ENCODE measurements at regions of chr3 and their contacts with region 1.

Region 1: GRCh38 chr3:112519424-112520001 is 20.2 kb upstream of the BTLA start:
- DNase-seq: peak in 2 of 4 donors; percentile 43 to 74
- ATAC-seq: peak; percentile 96
- H3K4me3 ChIP-seq: no peak overlapping the region
- H3K27ac ChIP-seq: no peak overlapping the region
- H3K4me1 ChIP-seq: no peaks in the 10 kb centered on the region
- H3K27me3 ChIP-seq: no peaks in the 10 kb centered on the region
- CTCF ChIP-seq: peak; percentile 61 to 64

Region 2: GRCh38 chr3:112293368-112294321 is 225.9 kb before region 1 on chr3 and contains the start of gene SLC9C1:
- intact Hi-C with region 1: loop called in 1 of 2 experiments (anchors 10 kb)
- DNase-seq: peak in 2 of 4 donors; percentile 72 to 87
- ATAC-seq: peak; percentile 94
- H3K4me3 ChIP-seq: peak within 1 kb of the TSS; percentile 28
- H3K27ac ChIP-seq: peak within 1 kb of the TSS; percentile 59 to 77
- H3K4me1 ChIP-seq: peaks cover 0 to 10% of the 10 kb centered on the region in 2 donors
- H3K27me3 ChIP-seq: no peaks in the 10 kb centered on the region
- CTCF ChIP-seq: peak; percentile 39 to 40
- polyA plus RNA-seq, gene SLC9C1: 0.54 to 1.3 (median 0.65) TPM

Region 3: DNA sequence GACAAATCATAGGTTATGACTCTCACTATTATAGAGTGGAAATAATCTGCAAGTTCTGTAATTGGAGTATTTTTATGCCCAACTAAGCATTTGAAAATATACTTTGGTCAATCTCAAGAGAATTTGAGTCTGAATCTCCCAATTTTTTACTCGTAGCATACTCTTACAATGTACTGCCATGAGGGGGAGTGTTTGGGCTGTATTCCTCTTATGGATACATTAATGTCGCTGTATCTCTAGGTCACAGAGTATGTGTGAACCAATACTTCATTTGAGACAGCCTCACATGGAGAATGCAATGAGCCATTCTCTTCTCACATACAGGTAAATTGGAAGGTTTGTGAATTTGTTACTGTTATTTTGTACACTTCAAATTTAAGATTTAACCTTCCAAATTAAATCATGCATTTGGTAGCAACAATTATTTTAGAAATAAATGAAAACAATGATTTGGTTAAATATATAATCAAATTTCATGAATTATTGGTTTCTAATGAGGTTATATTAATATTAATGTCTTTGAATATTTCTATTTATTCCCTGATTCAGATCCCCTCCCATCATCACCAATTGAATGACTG is 192.1 kb before region 1 on chr3:
- intact Hi-C with region 1: loop called in 1 of 2 experiments (anchors 5 kb)
- DNase-seq: peak in 1 of 4 donors; percentile 72
- ATAC-seq: peak; percentile 99
- H3K4me3 ChIP-seq: no peak overlapping the region
- H3K27ac ChIP-seq: no peak overlapping the region
- H3K4me1 ChIP-seq: peaks cover 0 to under 1% of the 10 kb centered on the region in 2 donors
- H3K27me3 ChIP-seq: peaks cover 0 to 7% of the 10 kb centered on the region in 2 donors
- CTCF ChIP-seq: peak; percentile 43 to 74

Measured in left lung (tissue), 14 donors.